SK-N-SH (cell line): ENCODE measurements at regions of chr15 and their contacts with region 1.

Region 1: GRCh38 chr15:74956648-74957300 is at the start of gene RPP25:
- DNase-seq: peak; percentile 92
- H3K4me3 ChIP-seq: peak within 1 kb of the TSS; percentile 54 to 64
- H3K27ac ChIP-seq: peak within 1 kb of the TSS in 1 of 2 experiments; percentile 98; a peak in 2 of 4 replicates
- H3K4me1 ChIP-seq: peaks cover 0 to 40% of the 10 kb centered on the region in 2 experiments; a peak in 1 of 4 replicates
- H3K27me3 ChIP-seq: no peaks in the 10 kb centered on the region; the same call in 1 of the 2 replicates
- CTCF ChIP-seq: no peak
- EP300 ChIP-seq: no peak
- RAD21 ChIP-seq: no peak
- polyA plus RNA-seq, gene RPP25: 1.7 TPM in 2 replicates

Region 2: GRCh38 chr15:74869726-74870407 is 86.9 kb before region 1 on chr15:
- CTCF ChIA-PET with region 1: no interaction called
- POLR2A ChIA-PET with region 1: no interaction called
- DNase-seq: peak; percentile 60
- H3K4me3 ChIP-seq: no peak overlapping the region
- H3K27ac ChIP-seq: no peak overlapping the region; a peak in 1 of 4 replicates
- H3K4me1 ChIP-seq: peaks cover 17 to 20% of the 10 kb centered on the region in 2 experiments; a peak in 2 of 4 replicates
- H3K27me3 ChIP-seq: no peaks in the 10 kb centered on the region
- CTCF ChIP-seq: no peak
- EP300 ChIP-seq: no peak
- RAD21 ChIP-seq: no peak

Region 3: DNA sequence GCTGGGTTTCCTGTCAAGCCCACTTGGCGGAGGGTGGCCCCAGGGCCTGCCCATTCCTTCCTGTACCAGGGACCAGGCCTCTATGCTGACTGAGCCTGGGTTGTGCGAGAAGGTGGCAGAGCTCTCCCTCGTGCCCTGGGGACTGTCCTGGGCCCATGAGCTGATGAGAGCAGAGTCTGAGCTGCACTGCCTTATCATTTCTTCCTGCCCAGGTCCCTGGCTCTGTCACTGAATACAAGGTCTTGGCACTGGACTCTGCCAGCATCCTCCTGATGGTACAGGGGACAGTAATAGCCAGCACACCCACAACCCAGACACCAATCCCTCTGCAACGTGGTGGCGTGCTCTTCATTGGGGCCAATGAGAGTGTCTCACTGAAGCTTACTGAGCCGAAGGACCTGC is 59.5 kb before region 1 on chr15:
- CTCF ChIA-PET with region 1: interaction called, 33 read pairs
- POLR2A ChIA-PET with region 1: interaction called, 10 read pairs
- DNase-seq: no peak
- H3K4me3 ChIP-seq: no peak overlapping the region
- H3K27ac ChIP-seq: peak overlapping the region in 1 of 2 experiments; percentile 23; a peak in 1 of 4 replicates
- H3K4me1 ChIP-seq: peaks cover 3 to 7% of the 10 kb centered on the region in 2 experiments; a peak in 2 of 4 replicates
- H3K27me3 ChIP-seq: no peaks in the 10 kb centered on the region
- CTCF ChIP-seq: no peak
- EP300 ChIP-seq: no peak
- RAD21 ChIP-seq: no peak

Region 4: GRCh38 chr15:74988007-74988800 is 31.4 kb after region 1 on chr15:
- CTCF ChIA-PET with region 1: interaction called, 36 read pairs
- POLR2A ChIA-PET with region 1: interaction called, 8 read pairs
- DNase-seq: peak; percentile 72
- H3K4me3 ChIP-seq: no peak overlapping the region; a peak in 1 of 4 replicates
- H3K27ac ChIP-seq: no peak overlapping the region
- H3K4me1 ChIP-seq: no peaks in the 10 kb centered on the region
- H3K27me3 ChIP-seq: no peaks in the 10 kb centered on the region
- CTCF ChIP-seq: peak; percentile 55
- EP300 ChIP-seq: no peak
- RAD21 ChIP-seq: peak; percentile 89

Region 5: DNA sequence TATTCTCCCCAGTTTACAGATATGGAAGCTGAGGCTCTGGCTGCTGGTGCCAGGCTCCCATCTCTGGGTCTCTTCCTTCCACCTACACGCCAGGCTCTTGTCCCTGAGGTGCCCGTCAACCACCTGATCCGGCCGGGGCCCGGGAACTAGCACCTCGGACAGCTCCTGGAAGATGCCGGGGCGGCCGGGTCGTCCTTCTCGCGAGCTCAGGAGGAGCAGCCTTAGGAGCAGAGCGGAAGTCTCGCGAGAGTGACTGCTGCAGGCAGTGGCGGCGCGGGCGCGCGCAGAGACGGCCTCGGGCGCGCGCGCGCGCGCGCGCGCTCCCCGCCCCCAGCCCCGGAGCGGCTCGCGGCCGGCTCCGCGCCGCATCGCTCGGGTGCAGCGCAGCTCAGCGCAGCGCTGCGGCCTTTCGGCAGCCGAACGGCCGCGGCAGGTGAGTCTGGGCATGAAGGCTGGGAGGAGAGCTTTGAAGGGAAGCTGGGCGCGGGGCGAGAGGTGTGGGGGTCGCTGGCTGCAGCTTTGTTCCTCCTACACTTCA is 38.5 kb after region 1 on chr15 and contains the start of gene SCAMP5:
- CTCF ChIA-PET with region 1: interaction called, 36 read pairs
- POLR2A ChIA-PET with region 1: interaction called, 47 read pairs
- DNase-seq: peak; percentile 97
- H3K4me3 ChIP-seq: peak within 1 kb of the TSS; percentile 67 to 84
- H3K27ac ChIP-seq: peak within 1 kb of the TSS in 1 of 2 experiments; percentile 90; a peak in 2 of 4 replicates
- H3K4me1 ChIP-seq: peaks cover 0 to 17% of the 10 kb centered on the region in 2 experiments; a peak in 1 of 4 replicates
- H3K27me3 ChIP-seq: no peaks in the 10 kb centered on the region
- CTCF ChIP-seq: no peak
- EP300 ChIP-seq: 0 out of 4 replicates have a peak, but pooled peaks of 1 of the 2 experiments have one; percentile 2
- RAD21 ChIP-seq: no peak
- polyA plus RNA-seq, gene SCAMP5: 27.9 and 32.7 TPM in 2 replicates